ENCODE measurements at regions of chr17 and their contacts with region 1.

Region 1: GRCh38 chr17:44044067-44044466 is 22.4 kb downstream of the LSM12 start:
- H3K4me3 ChIP-seq: no peak overlapping the region
- H3K27ac ChIP-seq: no peak overlapping the region
- H3K4me1 ChIP-seq: peaks cover 11% of the 10 kb centered on the region
- CTCF ChIP-seq: no peak

Region 2: DNA sequence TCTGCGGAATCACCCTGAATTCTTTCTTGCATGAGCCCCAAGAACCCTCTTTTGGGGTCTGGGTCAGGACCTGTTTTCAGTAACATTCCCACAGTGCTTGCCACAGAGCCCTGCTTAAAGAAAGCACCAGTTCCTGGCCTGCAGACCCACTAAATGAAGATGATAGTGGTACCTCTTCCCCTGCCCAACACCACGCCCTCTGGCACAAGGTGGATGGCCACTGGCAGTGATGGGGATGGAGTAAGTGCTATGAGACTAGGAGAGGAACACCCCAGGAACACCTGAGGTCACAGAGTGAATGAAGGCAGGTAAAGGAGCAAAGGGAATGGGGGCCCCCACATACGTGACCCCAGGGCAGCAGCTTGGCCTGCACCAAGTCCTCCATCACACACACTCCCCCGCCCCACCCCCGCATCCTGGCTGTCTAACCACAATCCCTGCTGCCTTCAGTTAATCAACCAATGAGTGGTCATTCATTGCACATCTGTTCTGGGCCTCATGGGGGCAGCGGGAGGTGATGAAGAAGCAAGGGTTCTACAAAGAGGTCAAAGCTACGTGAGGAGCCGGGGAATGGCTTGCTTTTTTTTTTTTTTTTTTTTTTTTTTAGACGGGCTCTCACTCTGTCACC is 97.9 kb before region 1 on chr17:
- CTCF ChIA-PET with region 1: interaction called, 62 read pairs
- POLR2A ChIA-PET with region 1: interaction called, 3 read pairs
- H3K4me3 ChIP-seq: no peak overlapping the region
- H3K27ac ChIP-seq: no peak overlapping the region
- H3K4me1 ChIP-seq: no peaks in the 10 kb centered on the region; the same call in 1 of the 2 replicates
- CTCF ChIP-seq: 0 out of 2 replicates have a peak, but pooled peaks have one; percentile 8

Region 3: GRCh38 chr17:44006598-44007345 is 37.3 kb before region 1 on chr17:
- CTCF ChIA-PET with region 1: interaction called, 28 read pairs
- POLR2A ChIA-PET with region 1: interaction called, 4 read pairs
- H3K4me3 ChIP-seq: peak overlapping the region; percentile 72
- H3K27ac ChIP-seq: peak overlapping the region; percentile 71
- H3K4me1 ChIP-seq: peaks cover 9% of the 10 kb centered on the region
- CTCF ChIP-seq: peak; percentile 61

Region 4: DNA sequence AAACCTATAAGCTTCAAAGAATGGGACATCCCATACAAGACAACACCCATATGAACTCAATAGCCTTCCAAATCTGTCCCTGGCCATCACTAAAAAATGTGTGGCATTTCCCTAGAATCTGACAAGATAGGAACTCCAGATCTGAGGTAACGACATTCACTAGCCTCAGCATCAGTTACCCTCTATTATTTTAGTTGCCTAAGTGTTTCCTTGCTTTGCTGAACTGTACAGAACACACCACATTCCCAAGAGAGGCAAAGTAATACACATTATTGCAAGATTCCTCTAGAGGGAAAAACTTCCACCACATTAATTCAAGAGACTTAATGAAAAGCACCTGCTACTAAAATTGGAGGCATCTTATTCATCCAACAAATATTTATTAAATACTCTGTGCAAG is 17.4 kb after region 1 on chr17:
- CTCF ChIA-PET with region 1: interaction called, 38 read pairs
- POLR2A ChIA-PET with region 1: interaction called, 5 read pairs
- H3K4me3 ChIP-seq: no peak overlapping the region
- H3K27ac ChIP-seq: no peak overlapping the region
- H3K4me1 ChIP-seq: no peaks in the 10 kb centered on the region
- CTCF ChIP-seq: no peak

Region 5: DNA sequence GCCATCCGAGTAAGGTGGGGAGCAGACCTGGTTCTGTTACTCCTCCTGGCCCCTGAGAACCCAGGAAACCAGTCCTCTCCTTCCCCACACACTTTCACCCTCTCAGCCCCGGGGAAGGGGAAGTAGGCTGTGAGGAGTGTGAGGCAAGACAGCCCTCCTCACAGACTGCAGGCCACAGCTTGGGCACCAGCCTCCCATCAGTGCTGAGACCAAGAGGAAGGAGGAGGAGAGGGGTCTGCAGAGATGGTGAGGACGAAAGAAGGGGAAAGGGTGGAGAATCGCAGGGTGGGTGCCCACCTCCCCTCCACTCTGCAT is 33.5 kb after region 1 on chr17:
- CTCF ChIA-PET with region 1: no interaction called
- POLR2A ChIA-PET with region 1: no interaction called
- H3K4me3 ChIP-seq: no peak overlapping the region
- H3K27ac ChIP-seq: peak overlapping the region; percentile 40; the same call in 1 of the 2 replicates
- H3K4me1 ChIP-seq: peaks cover 6% of the 10 kb centered on the region
- CTCF ChIP-seq: no peak

Region 6: GRCh38 chr17:44110823-44111633 is 67.0 kb after region 1 on chr17:
- CTCF ChIA-PET with region 1: interaction called, 25 read pairs
- POLR2A ChIA-PET with region 1: no interaction called
- H3K4me3 ChIP-seq: no peak overlapping the region
- H3K27ac ChIP-seq: peak overlapping the region; percentile 54; the same call in 1 of the 2 replicates
- H3K4me1 ChIP-seq: peaks cover 24% of the 10 kb centered on the region
- CTCF ChIP-seq: no peak

Region 7: DNA sequence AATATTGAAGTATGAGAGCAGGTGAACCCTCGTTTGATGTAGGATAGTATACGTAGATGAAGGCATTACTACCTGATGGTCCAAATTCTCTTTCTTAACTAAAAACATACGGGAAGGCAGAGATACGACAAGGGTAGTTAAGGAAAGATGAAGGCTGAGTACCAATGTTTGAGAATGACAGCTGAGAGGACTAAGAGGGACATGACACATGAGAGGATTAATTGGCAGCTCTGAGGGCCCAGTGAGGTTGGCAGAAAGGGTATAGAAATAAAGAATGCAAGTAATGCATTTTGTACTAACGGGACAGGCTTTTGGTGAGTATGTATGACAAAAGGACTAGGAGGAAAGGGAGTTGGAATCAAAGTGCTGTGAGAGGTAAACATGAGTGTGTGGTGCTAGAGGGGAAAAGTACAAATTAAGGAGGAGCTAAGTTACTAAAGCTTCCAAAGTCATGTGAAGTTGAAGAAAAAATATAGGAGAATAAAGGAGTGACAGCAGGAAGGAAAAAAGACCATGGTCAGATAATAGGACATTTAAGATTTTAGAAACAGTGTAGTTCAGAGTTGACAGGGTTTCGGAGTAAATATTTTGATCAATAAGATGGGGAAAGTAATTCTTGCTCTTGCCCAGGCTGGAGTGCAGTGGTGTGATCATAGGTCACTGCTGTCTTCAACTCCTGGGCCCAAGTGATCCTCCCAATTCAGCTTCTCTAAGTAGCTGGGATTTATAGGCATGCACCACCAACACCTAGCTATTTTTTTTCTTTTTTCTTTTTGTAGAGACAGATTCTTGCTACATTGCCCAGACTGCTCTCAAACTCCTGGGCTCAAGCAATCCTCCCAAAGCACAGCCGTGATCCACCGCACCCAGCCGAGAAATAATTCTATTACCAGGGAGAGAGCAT is 388.4 kb after region 1 on chr17:
- CTCF ChIA-PET with region 1: no interaction called
- POLR2A ChIA-PET with region 1: no interaction called
- H3K4me3 ChIP-seq: no peak overlapping the region
- H3K27ac ChIP-seq: no peak overlapping the region
- H3K4me1 ChIP-seq: no peaks in the 10 kb centered on the region
- CTCF ChIP-seq: no peak

Measured in HEK293 (cell line).